ENCODE measurements at regions of chr14 and their contacts with region 1.

Region 1: GRCh38 chr14:68843471-68844209 is 50.8 kb upstream of the ZFP36L1 start:
- DNase-seq: peak; percentile 66
- ATAC-seq: peak; percentile 93
- H3K4me3 Mint-ChIP-seq: peak overlapping the region; percentile 65
- H3K27ac Mint-ChIP-seq: peak overlapping the region; percentile 4
- H3K4me1 Mint-ChIP-seq: peaks cover 15% of the 10 kb centered on the region
- H3K27me3 Mint-ChIP-seq: peaks cover 4% of the 10 kb centered on the region
- CTCF ChIP-seq: peak; percentile 93

Region 2: DNA sequence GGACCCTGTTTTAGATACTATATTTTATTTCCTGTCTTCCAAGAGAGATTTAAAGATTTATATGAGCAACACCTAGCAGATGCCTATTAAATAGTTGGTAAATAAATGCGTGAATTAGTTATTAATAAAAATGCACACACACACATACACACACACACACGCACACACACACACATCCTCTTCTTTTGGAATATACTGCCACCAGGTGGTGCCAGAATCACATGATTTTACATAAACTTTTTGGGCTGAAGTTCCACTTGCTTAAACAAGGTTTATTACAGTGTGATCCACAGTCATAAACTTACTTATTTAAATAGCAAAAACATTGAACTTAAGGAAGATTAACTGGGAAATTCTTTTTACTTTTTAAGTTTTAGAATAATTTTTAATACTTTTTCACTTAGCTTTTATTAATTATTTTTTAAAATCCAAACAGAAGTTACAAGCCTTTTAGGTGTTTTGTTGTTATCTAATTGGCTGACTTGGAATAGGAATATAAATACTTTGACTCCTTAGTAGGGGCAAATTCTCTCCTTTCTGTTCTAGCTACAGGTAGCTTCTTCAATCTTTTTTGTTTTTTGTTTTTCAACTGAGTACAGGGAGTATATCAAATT is 1006.5 kb before region 1 on chr14:
- CTCF ChIA-PET with region 1: interaction called, 3 read pairs
- POLR2A ChIA-PET with region 1: no interaction called
- intact Hi-C with region 1: loop called (anchors 1 kb)
- DNase-seq: no peak
- ATAC-seq: peak; percentile 75
- H3K4me3 Mint-ChIP-seq: no peak overlapping the region
- H3K27ac Mint-ChIP-seq: no peak overlapping the region
- H3K4me1 Mint-ChIP-seq: no peaks in the 10 kb centered on the region
- H3K27me3 Mint-ChIP-seq: no peaks in the 10 kb centered on the region
- CTCF ChIP-seq: no peak

Region 3: GRCh38 chr14:67883717-67884116 is 959.9 kb before region 1 on chr14:
- CTCF ChIA-PET with region 1: interaction called, 16 read pairs
- POLR2A ChIA-PET with region 1: no interaction called
- intact Hi-C with region 1: loop called (anchors 2 kb)
- DNase-seq: no peak
- ATAC-seq: no peak
- H3K4me3 Mint-ChIP-seq: no peak overlapping the region
- H3K27ac Mint-ChIP-seq: no peak overlapping the region
- H3K4me1 Mint-ChIP-seq: peaks cover 4% of the 10 kb centered on the region
- H3K27me3 Mint-ChIP-seq: no peaks in the 10 kb centered on the region
- CTCF ChIP-seq: no peak

Region 4: GRCh38 chr14:67934008-67934481 is 909.6 kb before region 1 on chr14:
- CTCF ChIA-PET with region 1: interaction called, 22 read pairs
- POLR2A ChIA-PET with region 1: interaction called, 3 read pairs
- intact Hi-C with region 1: loop called (anchors 1 kb)
- DNase-seq: no peak
- ATAC-seq: peak; percentile 77
- H3K4me3 Mint-ChIP-seq: no peak overlapping the region
- H3K27ac Mint-ChIP-seq: no peak overlapping the region
- H3K4me1 Mint-ChIP-seq: peaks cover 4% of the 10 kb centered on the region
- H3K27me3 Mint-ChIP-seq: no peaks in the 10 kb centered on the region
- CTCF ChIP-seq: no peak

Region 5: DNA sequence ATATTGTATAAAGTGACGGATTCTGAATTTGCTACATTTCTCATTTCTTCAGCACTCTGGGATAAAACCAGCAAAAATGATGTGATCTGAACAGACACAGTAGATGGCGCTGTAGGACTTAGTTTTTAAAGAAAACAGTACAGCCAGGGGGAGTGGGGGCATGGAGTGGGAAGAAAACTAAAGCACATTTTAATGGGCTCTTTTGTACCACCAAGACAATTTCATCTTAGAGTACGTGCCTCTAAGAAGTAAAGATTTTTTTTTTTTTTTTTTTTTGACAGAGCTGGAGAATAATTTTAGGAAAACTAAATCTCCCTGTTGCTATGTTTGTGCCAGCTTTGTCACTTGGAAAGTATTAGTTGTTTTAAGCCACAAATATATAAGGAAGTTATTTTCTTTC is 899.7 kb before region 1 on chr14:
- CTCF ChIA-PET with region 1: interaction called, 30 read pairs
- POLR2A ChIA-PET with region 1: no interaction called
- intact Hi-C with region 1: loop called (anchors 1 kb)
- DNase-seq: no peak
- ATAC-seq: peak; percentile 54
- H3K4me3 Mint-ChIP-seq: no peak overlapping the region
- H3K27ac Mint-ChIP-seq: no peak overlapping the region
- H3K4me1 Mint-ChIP-seq: peaks cover 8% of the 10 kb centered on the region
- H3K27me3 Mint-ChIP-seq: no peaks in the 10 kb centered on the region
- CTCF ChIP-seq: no peak

Region 6: GRCh38 chr14:68824517-68825347 is 18.9 kb before region 1 on chr14:
- CTCF ChIA-PET with region 1: interaction called, 26 read pairs
- POLR2A ChIA-PET with region 1: interaction called, 3 read pairs
- intact Hi-C with region 1: no loop called
- DNase-seq: no peak
- ATAC-seq: no peak
- H3K4me3 Mint-ChIP-seq: no peak overlapping the region
- H3K27ac Mint-ChIP-seq: no peak overlapping the region
- H3K4me1 Mint-ChIP-seq: peaks cover 50% of the 10 kb centered on the region
- H3K27me3 Mint-ChIP-seq: no peaks in the 10 kb centered on the region
- CTCF ChIP-seq: no peak